ENCODE measurements at regions of chr9 and their contacts with region 1.

Region 1: GRCh38 chr9:73149371-73150067 is 2.1 kb upstream of the ANXA1 start:
- DNase-seq: peak; percentile 76
- H3K4me3 Mint-ChIP-seq: peak overlapping the region; percentile 65
- H3K27ac Mint-ChIP-seq: peak overlapping the region; percentile 89
- H3K4me1 Mint-ChIP-seq: peaks cover 54% of the 10 kb centered on the region
- H3K27me3 Mint-ChIP-seq: no peaks in the 10 kb centered on the region

Region 2: GRCh38 chr9:72349240-72349639 is 800.3 kb before region 1 on chr9:
- intact Hi-C with region 1: loop called (anchors 5 kb)
- DNase-seq: no peak
- H3K4me3 Mint-ChIP-seq: no peak overlapping the region
- H3K27ac Mint-ChIP-seq: no peak overlapping the region
- H3K4me1 Mint-ChIP-seq: peaks cover 22% of the 10 kb centered on the region
- H3K27me3 Mint-ChIP-seq: no peaks in the 10 kb centered on the region

Region 3: DNA sequence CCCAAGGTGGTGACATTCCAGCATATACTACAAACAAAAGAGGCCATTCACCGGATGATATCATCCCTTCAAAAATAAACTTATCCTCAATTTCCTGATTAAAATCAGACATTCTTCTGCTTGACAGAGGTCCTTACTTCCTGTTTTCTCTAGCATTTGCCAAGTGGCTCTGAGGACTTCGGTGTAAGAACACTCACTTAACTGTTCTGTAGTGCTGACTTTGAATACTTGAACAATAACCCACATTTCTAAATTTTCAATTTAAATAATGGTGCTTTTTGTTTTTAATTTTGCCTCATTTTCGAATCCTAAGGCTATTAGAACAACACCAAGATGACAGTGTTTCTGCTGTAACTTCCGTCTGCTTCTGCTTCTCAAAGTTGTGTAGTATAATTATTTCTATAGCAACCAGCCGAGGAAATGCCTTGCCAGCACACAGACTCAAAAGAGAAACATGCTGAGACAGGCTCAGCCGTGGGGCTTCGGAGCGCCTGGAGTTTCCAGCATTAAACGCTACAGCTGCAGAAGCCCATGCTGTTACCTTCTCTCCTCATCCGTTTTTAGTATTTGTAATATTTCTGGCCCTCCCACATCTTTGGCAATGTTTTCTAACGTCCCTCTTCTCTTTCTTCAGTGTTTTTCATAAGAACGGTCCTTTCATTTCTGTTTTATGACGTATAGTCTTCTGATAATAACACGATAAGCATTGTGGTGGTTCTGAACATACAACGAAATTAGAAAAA is 17.3 kb before region 1 on chr9:
- intact Hi-C with region 1: loop called (anchors 1 kb)
- DNase-seq: peak; percentile 93
- H3K4me3 Mint-ChIP-seq: peak overlapping the region; percentile 82
- H3K27ac Mint-ChIP-seq: peak overlapping the region; percentile 91
- H3K4me1 Mint-ChIP-seq: peaks cover 40% of the 10 kb centered on the region
- H3K27me3 Mint-ChIP-seq: no peaks in the 10 kb centered on the region

Region 4: DNA sequence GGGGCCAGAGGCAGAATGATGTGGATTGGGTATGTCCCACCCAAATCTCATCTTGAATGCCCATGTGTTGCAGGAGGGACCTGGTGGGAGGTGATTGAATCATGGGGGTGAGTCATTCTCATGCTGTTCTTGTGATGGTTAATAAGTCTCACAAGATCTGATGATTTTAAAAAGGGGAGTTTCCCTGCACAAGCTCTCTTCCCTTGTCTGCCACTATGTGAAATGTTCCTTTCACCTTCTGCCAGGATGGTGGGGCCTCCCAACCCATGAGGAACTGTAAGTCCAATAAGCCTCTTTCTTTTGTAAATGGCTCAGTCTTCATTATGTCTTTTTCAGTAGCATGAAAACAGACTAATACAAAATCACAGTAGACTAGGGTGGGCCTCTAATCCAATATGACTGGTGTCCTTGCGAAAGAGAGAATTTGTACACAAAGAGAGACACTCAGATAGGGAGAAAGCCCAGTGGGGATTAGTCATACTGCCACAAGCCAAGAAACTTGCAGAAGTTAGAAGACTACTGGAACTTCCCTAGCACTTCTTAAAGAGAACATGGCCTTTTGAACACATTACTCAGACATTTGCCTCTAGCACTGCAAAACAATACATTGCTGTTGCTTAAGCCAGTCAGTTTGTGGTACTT is 70.6 kb after region 1 on chr9:
- intact Hi-C with region 1: loop called (anchors 1 kb)
- DNase-seq: no peak
- H3K4me3 Mint-ChIP-seq: peak overlapping the region; percentile 23
- H3K27ac Mint-ChIP-seq: peak overlapping the region; percentile 90
- H3K4me1 Mint-ChIP-seq: peaks cover 11% of the 10 kb centered on the region
- H3K27me3 Mint-ChIP-seq: peaks cover 13% of the 10 kb centered on the region

Measured in activated CD4-positive, alpha-beta T cell treated with anti-CD3 and anti-CD28 coated beads, Interleukin-2, amount 10 ng/mL, durations not matched to agents 24 days and 14 days (primary cell).